MCF 10A (cell line): ENCODE measurements at regions of chr13 and their contacts with region 1.

Region 1: DNA sequence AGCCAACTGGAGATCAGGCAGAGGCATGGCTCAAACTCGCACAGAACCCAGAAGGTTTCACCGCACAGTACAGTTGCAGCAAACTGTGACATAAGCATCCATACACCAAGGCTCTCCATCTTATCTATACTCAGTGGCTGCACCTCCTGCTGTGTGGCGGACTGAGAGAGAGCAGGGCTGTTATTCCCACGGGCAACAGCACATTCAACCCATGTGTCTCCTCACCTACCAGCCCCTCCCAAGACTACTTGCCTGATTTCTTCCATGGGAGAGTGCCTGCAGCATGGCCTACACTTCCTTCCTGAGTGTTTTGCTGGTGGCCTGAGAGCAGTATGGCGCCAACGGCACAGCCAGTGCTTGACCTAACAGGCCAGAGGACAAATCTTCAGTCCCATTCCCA is 1606.6 kb downstream of the SLITRK1 start:
- DNase-seq: no peak
- H3K4me3 Mint-ChIP-seq: no peak overlapping the region
- H3K27ac Mint-ChIP-seq: no peak overlapping the region
- H3K4me1 Mint-ChIP-seq: no peaks in the 10 kb centered on the region
- H3K27me3 Mint-ChIP-seq: no peaks in the 10 kb centered on the region
- CTCF ChIP-seq: no peak

Region 2: GRCh38 chr13:82298106-82298505 is 22.5 kb after region 1 on chr13:
- CTCF ChIA-PET with region 1: no interaction called
- POLR2A ChIA-PET with region 1: no interaction called
- intact Hi-C with region 1: loop called (anchors 1 kb)
- DNase-seq: no peak
- H3K4me3 Mint-ChIP-seq: no peak overlapping the region
- H3K27ac Mint-ChIP-seq: no peak overlapping the region
- H3K4me1 Mint-ChIP-seq: no peaks in the 10 kb centered on the region
- H3K27me3 Mint-ChIP-seq: no peaks in the 10 kb centered on the region
- CTCF ChIP-seq: no peak